GM12878 (cell line): ENCODE measurements at regions of chr11 and their contacts with region 1.

Region 1: GRCh38 chr11:121864660-121865059 is 251.4 kb downstream of the BLID start:
- DNase-seq: no peak
- ATAC-seq: no peak
- H3K4me3 ChIP-seq: no peak overlapping the region
- H3K27ac ChIP-seq: no peak overlapping the region
- H3K4me1 ChIP-seq: no peaks in the 10 kb centered on the region
- H3K27me3 ChIP-seq: no peaks in the 10 kb centered on the region
- CTCF ChIP-seq: no peak
- EP300 ChIP-seq: no peak
- POLR2A ChIP-seq: no peak
- RAD21 ChIP-seq: no peak

Region 2: DNA sequence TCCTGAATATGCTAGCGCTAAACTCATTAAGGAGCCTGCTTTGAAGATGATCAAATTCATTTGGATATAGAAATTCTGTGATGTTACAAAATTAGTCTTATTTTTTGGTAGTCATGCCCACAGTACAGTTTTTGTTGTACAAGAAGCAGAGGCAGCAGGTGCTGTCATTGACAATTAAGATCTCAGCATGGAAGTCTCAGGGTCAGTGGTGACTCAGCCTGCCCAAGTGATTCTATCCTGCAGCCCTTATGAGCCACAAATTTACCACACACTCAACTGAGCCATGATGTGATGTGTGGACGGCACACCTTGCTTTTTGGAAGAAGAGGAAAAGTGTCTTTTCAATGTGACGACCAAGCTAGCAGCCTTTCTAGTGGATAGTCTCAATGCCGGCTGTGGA is 258.3 kb before region 1 on chr11:
- CTCF ChIA-PET with region 1: no interaction called
- POLR2A ChIA-PET with region 1: no interaction called
- RAD21 ChIA-PET with region 1: no interaction called
- SMC1A ChIA-PET with region 1: no interaction called
- in situ Hi-C with region 1: no loop called
- intact Hi-C with region 1: no loop called
- DNase-seq: no peak
- ATAC-seq: no peak
- H3K4me3 ChIP-seq: no peak overlapping the region
- H3K27ac ChIP-seq: no peak overlapping the region
- H3K4me1 ChIP-seq: no peaks in the 10 kb centered on the region
- H3K27me3 ChIP-seq: no peaks in the 10 kb centered on the region
- CTCF ChIP-seq: no peak
- EP300 ChIP-seq: no peak
- POLR2A ChIP-seq: no peak
- RAD21 ChIP-seq: no peak

Region 3: DNA sequence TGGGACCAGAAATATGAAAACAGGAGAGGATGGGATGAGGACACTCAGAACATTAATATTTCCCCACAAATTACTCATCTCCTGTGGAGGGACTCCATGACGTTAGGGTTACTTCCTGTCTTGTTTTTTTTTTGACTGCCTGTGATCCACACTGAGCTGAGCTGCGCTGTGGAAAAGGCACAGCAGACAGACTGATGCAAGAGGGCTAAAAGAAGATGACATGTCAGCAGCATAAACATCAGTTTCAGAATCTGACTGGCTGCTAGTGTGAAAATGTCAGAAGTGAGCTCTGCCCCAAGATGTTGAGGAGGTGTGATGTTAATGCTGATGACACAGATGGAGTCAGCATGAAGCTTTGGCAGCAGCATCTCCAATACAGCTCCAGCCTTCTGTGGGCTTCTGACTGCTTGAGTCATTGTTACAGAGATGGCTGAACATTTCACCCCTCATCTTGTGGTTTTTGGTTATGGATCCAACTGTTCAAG is 35.5 kb before region 1 on chr11:
- CTCF ChIA-PET with region 1: no interaction called
- POLR2A ChIA-PET with region 1: no interaction called
- RAD21 ChIA-PET with region 1: no interaction called
- SMC1A ChIA-PET with region 1: no interaction called
- in situ Hi-C with region 1: no loop called
- intact Hi-C with region 1: no loop called
- DNase-seq: no peak
- ATAC-seq: no peak
- H3K4me3 ChIP-seq: no peak overlapping the region
- H3K27ac ChIP-seq: no peak overlapping the region
- H3K4me1 ChIP-seq: no peaks in the 10 kb centered on the region
- H3K27me3 ChIP-seq: no peaks in the 10 kb centered on the region
- CTCF ChIP-seq: no peak
- EP300 ChIP-seq: no peak
- POLR2A ChIP-seq: no peak
- RAD21 ChIP-seq: no peak

Region 4: DNA sequence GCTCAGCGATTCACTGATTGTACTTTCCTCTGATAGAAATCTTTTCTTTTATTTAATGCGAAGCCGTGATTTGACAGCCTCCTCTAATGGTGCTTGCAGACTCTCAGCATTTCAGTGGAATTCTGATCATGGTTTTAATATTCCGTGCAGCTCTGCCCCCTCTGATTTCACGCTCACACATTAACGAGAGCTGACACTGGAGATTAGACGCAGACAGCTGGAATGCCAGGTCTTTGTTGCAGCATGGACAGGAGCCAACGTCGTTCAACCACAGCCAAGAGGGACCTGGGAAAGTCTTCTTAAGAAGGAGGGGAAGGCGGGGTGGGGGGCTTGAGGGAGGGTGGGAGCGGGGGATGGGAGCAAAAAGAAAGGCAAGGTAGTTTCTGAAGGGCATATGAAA is 64.9 kb after region 1 on chr11:
- CTCF ChIA-PET with region 1: no interaction called
- POLR2A ChIA-PET with region 1: no interaction called
- RAD21 ChIA-PET with region 1: no interaction called
- SMC1A ChIA-PET with region 1: no interaction called
- in situ Hi-C with region 1: no loop called
- intact Hi-C with region 1: loop called (anchors 10 kb)
- DNase-seq: no peak
- ATAC-seq: no peak; the same call in 2 of the 3 replicates
- H3K4me3 ChIP-seq: peak overlapping the region; percentile 47; the same call in 1 of the 2 replicates
- H3K27ac ChIP-seq: no peak overlapping the region
- H3K4me1 ChIP-seq: peaks cover 3% of the 10 kb centered on the region; the same call in 1 of the 2 replicates
- H3K27me3 ChIP-seq: no peaks in the 10 kb centered on the region
- CTCF ChIP-seq: no peak
- EP300 ChIP-seq: no peak
- POLR2A ChIP-seq: no peak
- RAD21 ChIP-seq: no peak